Heart right ventricle (tissue), 16 donors: ENCODE measurements at regions of chr10 and their contacts with region 1.

Region 1: DNA sequence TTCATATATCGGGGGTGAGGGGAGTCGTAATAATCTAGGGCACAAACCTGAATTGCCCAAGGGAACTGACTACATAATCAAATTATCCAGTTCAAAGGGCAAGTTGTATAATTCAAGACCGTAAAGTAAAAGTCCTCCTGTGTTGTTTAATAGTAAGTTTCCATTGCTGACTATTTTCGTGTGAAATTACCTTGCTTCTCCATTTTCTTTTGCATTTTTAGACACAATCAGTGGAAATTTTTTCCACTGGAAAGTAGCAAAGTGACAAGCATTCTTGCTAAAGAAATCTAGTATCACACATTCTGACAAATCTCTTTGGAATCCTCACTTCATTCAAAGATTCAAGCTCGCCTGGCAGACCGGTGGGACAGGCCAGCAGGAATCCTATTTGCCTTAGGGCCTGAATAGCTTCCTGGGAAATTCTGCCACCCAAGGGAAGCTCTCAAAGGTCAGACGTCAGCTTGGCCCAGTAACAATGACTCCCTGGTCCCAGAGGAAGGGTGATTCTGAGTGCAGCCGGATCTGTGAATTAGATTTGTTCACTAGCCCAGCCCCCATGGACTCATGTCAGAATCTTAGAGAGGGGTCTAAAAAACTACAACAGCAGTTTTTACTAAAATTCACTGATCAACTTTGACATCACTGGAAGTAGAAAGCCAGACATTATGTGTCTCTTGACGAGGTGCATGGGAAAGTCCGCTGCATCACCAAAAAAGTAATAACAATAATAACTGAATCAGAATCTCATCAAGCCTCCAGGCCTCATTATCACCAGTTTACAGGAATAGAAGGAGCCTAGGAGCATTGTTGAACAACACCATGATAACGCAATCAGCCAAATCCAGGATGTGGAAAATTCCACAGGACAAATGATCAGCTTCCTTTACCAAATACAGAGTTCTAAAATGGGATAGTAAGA is 161.0 kb downstream of the SKIDA1 start:
- DNase-seq: peak; percentile 24 to 80
- ATAC-seq: peak; percentile 83 to 95 (median 91)
- H3K4me3 ChIP-seq: no peak overlapping the region
- H3K27ac ChIP-seq: peak overlapping the region in 9 of 10 donors; percentile 42 to 93 (median 79)
- H3K4me1 ChIP-seq: peaks cover 4 to 43% (median 32%) of the 10 kb centered on the region in 9 donors
- H3K27me3 ChIP-seq: no peaks in the 10 kb centered on the region
- CTCF ChIP-seq: no peak

Region 2: DNA sequence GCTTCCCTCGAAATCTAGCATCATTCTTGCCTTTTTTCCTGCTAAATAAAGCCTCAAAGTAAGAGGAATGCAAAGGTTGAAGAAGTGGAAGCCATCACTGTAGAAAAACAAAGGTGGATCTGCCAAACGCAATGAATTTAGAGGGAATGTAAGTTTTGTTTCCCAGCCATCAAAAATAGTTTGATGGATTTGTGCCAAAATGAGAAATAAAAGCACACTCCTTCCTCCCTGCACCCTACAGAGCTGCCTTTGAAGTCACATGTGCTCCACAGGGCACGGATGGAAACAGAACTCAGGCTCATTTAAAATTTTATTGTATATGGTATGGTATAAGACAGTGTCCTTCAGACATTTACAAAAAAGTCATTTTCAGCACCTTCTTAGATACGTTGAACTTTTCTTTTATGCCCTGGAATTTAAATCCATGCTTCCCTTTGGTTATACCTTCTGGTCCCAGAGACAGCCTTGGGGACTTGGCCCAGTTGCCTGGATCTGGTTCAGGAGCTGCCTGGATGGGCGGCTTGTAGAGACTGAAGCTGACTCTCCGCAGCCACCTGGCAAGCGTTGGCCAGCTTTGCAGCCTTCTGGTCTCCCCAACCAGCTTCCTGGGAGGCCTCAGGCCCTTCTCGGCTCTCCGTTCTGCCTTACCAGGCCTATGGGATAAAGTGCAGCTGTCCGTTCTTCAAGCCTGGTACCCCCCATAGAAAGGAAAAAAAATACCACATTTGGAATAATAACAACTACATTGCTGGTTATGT is 238.8 kb before region 1 on chr10:
- intact Hi-C with region 1: no loop called
- DNase-seq: no peak
- ATAC-seq: no peak
- H3K4me3 ChIP-seq: no peak overlapping the region
- H3K27ac ChIP-seq: no peak overlapping the region
- H3K4me1 ChIP-seq: no peaks in the 10 kb centered on the region
- H3K27me3 ChIP-seq: no peaks in the 10 kb centered on the region
- CTCF ChIP-seq: no peak

Region 3: GRCh38 chr10:21285742-21286331 is 78.6 kb before region 1 on chr10:
- intact Hi-C with region 1: loop called in 2 of 10 experiments (anchors 5 to 10 kb)
- DNase-seq: no peak
- ATAC-seq: no peak
- H3K4me3 ChIP-seq: no peak overlapping the region
- H3K27ac ChIP-seq: no peak overlapping the region
- H3K4me1 ChIP-seq: no peaks in the 10 kb centered on the region
- H3K27me3 ChIP-seq: no peaks in the 10 kb centered on the region
- CTCF ChIP-seq: no peak

Region 4: GRCh38 chr10:21292763-21293517 is 71.5 kb before region 1 on chr10:
- intact Hi-C with region 1: loop called in 2 of 10 experiments (anchors 5 to 10 kb)
- DNase-seq: peak; percentile 58 to 86
- ATAC-seq: peak; percentile 74 to 96 (median 92)
- H3K4me3 ChIP-seq: peak overlapping the region in 7 of 10 donors; percentile 9 to 47 (median 37)
- H3K27ac ChIP-seq: peak overlapping the region in 9 of 10 donors; percentile 17 to 62 (median 46)
- H3K4me1 ChIP-seq: peaks cover 0 to 26% (median 17%) of the 10 kb centered on the region in 9 donors
- H3K27me3 ChIP-seq: no peaks in the 10 kb centered on the region
- CTCF ChIP-seq: no peak

Region 5: DNA sequence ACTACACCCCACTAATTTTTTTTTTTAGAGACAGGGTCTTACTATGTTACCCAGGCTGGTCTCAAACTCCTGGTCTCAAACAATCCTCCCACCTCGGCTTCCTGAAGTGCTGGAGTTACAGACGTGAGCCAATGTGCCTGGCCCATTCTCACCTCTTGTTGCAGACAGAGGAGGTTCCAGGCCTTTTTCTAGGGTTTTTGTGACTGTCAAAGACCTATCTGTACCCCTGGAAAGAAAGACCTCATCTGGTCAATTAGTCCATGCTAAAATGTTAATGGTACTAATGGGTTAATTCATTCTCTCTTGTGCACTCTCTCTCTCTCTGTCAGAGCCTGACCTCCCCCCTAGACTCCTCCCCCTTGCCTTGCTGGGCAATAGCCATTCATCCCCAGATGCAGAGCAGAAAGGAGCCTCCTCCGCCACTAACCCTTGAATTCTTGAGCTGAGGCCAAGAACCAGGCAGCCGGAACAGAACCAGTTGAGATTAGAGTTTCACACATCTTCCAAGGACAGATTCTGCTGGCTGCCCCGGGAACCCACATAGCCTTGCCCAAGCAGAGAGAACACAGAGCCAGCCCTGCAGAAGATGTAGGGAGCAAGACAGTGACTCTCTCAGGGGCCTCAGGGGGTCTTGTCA is 48.7 kb before region 1 on chr10:
- intact Hi-C with region 1: loop called in 1 of 10 experiments (anchors 2 kb)
- DNase-seq: peak; percentile 69 to 89
- ATAC-seq: peak; percentile 91 to 97 (median 96)
- H3K4me3 ChIP-seq: no peak overlapping the region
- H3K27ac ChIP-seq: peak overlapping the region in 9 of 10 donors; percentile 17 to 79 (median 69)
- H3K4me1 ChIP-seq: peaks cover 21 to 40% (median 32%) of the 10 kb centered on the region in 9 donors
- H3K27me3 ChIP-seq: no peaks in the 10 kb centered on the region
- CTCF ChIP-seq: no peak

Region 6: GRCh38 chr10:21413268-21413667 is 48.8 kb after region 1 on chr10:
- intact Hi-C with region 1: no loop called
- DNase-seq: no peak
- ATAC-seq: no peak
- H3K4me3 ChIP-seq: no peak overlapping the region
- H3K27ac ChIP-seq: no peak overlapping the region
- H3K4me1 ChIP-seq: no peaks in the 10 kb centered on the region
- H3K27me3 ChIP-seq: no peaks in the 10 kb centered on the region
- CTCF ChIP-seq: no peak